CD8-positive, alpha-beta T cell (primary cell): ENCODE measurements at regions of chr6 and their contacts with region 1.

Region 1: GRCh38 chr6:27838058-27838944 is 73.9 kb downstream of the OR2B2 start:
- DNase-seq: peak; percentile 61 to 98 (median 74)
- ATAC-seq: peak; percentile 70
- H3K4me3 ChIP-seq: peak overlapping the region; percentile 64 to 76
- H3K4me3 Mint-ChIP-seq: no peak overlapping the region
- H3K27ac ChIP-seq: peak overlapping the region; percentile 91 to 98
- H3K27ac Mint-ChIP-seq: no peak overlapping the region
- H3K4me1 ChIP-seq: peaks cover 35% of the 10 kb centered on the region
- H3K4me1 Mint-ChIP-seq: peaks cover 21% of the 10 kb centered on the region
- H3K27me3 ChIP-seq: peaks cover 0 to 4% of the 10 kb centered on the region in 2 experiments
- H3K27me3 Mint-ChIP-seq: peaks cover 7% of the 10 kb centered on the region
- CTCF ChIP-seq: no peak

Region 2: GRCh38 chr6:26031595-26032339 is 1806.5 kb before region 1 on chr6:
- CTCF ChIA-PET with region 1: interaction called, 3 read pairs
- POLR2A ChIA-PET with region 1: interaction called, 29 read pairs
- intact Hi-C with region 1: loop called in 1 of 2 experiments (anchors 5 kb)
- DNase-seq: peak; percentile 79 to 93 (median 88)
- ATAC-seq: peak; percentile 63
- H3K4me3 ChIP-seq: peak overlapping the region; percentile 68 to 71
- H3K4me3 Mint-ChIP-seq: peak overlapping the region; percentile 93
- H3K27ac ChIP-seq: peak overlapping the region; percentile 76 to 79
- H3K27ac Mint-ChIP-seq: peak overlapping the region; percentile 96
- H3K4me1 ChIP-seq: peaks cover 31% of the 10 kb centered on the region
- H3K4me1 Mint-ChIP-seq: peaks cover 46% of the 10 kb centered on the region
- H3K27me3 ChIP-seq: no peaks in the 10 kb centered on the region
- H3K27me3 Mint-ChIP-seq: no peaks in the 10 kb centered on the region
- CTCF ChIP-seq: no peak

Region 3: GRCh38 chr6:26183581-26184366 is 1654.5 kb before region 1 on chr6:
- CTCF ChIA-PET with region 1: no interaction called
- POLR2A ChIA-PET with region 1: interaction called, 16 read pairs
- intact Hi-C with region 1: loop called in 1 of 2 experiments (anchors 5 kb)
- DNase-seq: peak in 7 of 9 experiments; percentile 33 to 90 (median 59)
- ATAC-seq: peak; percentile 88
- H3K4me3 ChIP-seq: peak overlapping the region; percentile 60 to 71
- H3K4me3 Mint-ChIP-seq: peak overlapping the region; percentile 100
- H3K27ac ChIP-seq: peak overlapping the region; percentile 61 to 76
- H3K27ac Mint-ChIP-seq: peak overlapping the region; percentile 99
- H3K4me1 ChIP-seq: peaks cover 20% of the 10 kb centered on the region
- H3K4me1 Mint-ChIP-seq: peaks cover 42% of the 10 kb centered on the region
- H3K27me3 ChIP-seq: no peaks in the 10 kb centered on the region
- H3K27me3 Mint-ChIP-seq: no peaks in the 10 kb centered on the region
- CTCF ChIP-seq: no peak

Region 4: DNA sequence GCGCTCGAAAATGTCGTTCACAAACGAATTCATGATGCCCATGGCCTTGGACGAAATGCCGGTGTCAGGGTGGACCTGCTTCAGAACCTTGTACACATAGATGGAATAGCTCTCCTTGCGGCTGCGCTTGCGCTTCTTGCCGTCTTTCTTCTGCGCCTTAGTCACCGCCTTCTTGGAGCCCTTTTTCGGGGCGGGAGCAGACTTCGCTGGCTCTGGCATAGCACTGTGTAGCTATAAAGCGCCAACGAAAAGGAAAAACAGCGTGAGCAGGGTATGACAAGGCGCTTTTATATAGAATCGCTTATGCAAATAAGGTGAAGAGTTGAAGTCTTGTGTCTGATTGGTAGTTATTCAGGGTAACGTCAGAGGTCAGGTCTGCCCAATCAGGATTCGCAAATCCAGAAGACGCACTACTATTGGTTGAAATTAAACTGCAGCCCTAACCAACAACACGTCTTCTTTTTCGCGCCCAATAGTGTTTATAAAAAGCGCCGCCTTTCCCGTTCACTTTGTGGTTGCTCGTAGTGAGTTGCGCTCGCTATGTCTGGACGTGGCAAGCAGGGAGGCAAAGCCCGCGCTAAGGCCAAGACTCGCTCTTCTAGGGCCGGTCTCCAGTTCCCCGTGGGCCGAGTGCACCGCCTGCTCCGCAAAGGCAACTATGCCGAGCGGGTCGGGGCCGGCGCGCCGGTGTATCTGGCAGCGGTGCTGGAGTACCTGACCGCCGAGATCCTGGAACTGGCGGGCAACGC is 705.6 kb before region 1 on chr6:
- CTCF ChIA-PET with region 1: no interaction called
- POLR2A ChIA-PET with region 1: interaction called, 37 read pairs
- intact Hi-C with region 1: no loop called
- DNase-seq: peak; percentile 80 to 99 (median 87)
- ATAC-seq: peak; percentile 82
- H3K4me3 ChIP-seq: peak overlapping the region; percentile 76 to 83
- H3K4me3 Mint-ChIP-seq: no peak overlapping the region
- H3K27ac ChIP-seq: peak overlapping the region; percentile 86 to 92
- H3K27ac Mint-ChIP-seq: no peak overlapping the region
- H3K4me1 ChIP-seq: peaks cover 15% of the 10 kb centered on the region
- H3K4me1 Mint-ChIP-seq: peaks cover 21% of the 10 kb centered on the region
- H3K27me3 ChIP-seq: no peaks in the 10 kb centered on the region
- H3K27me3 Mint-ChIP-seq: no peaks in the 10 kb centered on the region
- CTCF ChIP-seq: no peak

Region 5: DNA sequence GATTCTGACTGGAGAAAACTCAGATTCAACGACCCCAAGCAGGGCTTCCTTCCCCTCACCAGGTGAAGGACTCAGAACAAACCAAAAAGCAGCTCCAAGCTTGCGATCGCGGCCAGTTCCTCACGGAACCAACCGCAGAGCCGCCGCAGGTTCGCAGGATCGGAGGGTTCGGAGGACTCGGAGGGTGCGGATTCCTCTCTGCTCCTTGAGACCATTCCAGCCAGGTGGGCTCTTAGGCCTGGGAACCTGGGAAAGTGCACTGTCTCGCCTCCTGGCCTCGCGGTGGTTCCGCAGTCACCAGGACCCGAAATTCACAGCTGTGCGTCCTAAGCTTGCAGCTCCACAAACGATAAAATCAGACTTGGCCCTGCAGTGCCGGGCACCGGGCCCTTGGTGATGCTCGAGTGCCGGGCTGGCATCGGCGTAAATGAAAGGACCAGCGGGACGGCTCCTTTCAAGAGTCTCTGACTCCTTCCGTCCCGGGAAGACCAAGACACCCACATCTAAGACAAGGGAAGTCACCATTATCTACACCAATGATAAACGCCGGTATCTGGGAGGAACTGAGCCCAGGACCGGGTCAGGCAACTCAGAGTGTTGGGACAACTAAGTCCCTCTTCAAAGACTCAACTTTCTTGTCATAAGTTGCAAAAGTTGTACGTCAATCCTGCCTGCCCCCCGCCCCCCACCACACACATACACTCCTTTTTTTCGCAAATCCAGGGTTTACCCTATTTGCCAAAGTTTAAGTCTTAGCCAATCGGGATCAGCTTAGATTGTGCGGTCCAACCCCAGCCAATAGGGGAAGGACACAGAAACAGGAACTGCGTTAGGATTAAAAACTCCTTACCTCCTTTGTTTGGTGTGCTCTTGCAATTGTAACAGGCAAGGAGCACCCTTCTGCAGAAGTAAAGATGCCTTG is 660.6 kb before region 1 on chr6:
- CTCF ChIA-PET with region 1: no interaction called
- POLR2A ChIA-PET with region 1: interaction called, 16 read pairs
- intact Hi-C with region 1: no loop called
- DNase-seq: peak; percentile 46 to 89 (median 72)
- ATAC-seq: peak; percentile 69
- H3K4me3 ChIP-seq: peak overlapping the region; percentile 95 to 100
- H3K4me3 Mint-ChIP-seq: peak overlapping the region; percentile 93
- H3K27ac ChIP-seq: peak overlapping the region; percentile 48 to 68
- H3K27ac Mint-ChIP-seq: peak overlapping the region; percentile 91
- H3K4me1 ChIP-seq: no peaks in the 10 kb centered on the region
- H3K4me1 Mint-ChIP-seq: peaks cover 17% of the 10 kb centered on the region
- H3K27me3 ChIP-seq: no peaks in the 10 kb centered on the region
- H3K27me3 Mint-ChIP-seq: peaks cover 3% of the 10 kb centered on the region
- CTCF ChIP-seq: peak; percentile 11

Region 6: DNA sequence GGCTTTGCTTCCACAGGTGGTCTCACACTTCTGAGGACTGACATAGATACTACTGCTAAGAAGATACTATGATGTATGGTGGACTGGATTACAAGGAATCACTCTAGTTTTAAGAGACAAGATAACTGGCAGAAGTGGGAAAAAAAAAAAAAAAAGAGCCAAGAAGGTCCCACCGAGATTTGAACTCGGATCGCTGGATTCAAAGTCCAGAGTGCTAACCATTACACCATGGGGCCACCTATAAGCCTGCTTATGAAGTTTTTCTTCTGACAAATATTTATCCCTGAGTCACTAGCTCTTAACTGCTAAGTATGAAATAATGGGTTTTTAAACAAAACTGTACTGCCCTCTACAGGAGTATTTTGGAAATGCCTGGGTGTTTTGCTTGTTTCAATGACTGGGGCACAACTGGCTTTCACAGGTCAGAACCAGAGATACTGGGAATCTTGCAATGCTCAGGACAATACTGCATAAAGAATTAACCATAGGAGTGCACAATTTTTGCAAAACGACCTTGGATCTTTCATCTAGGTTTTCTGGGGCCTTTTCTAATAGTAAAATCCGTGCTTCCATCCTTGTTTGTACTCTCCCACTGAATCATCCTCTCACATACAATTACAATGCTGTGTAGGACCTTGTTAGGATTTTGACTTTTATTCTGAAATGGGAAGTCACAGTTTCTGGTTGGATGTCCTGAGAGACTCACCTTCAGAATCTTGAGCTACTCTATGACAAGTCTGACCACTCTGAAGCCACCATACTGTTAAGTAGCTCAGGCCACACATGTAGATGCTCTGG is 42.4 kb before region 1 on chr6:
- CTCF ChIA-PET with region 1: interaction called, 15 read pairs
- POLR2A ChIA-PET with region 1: interaction called, 16 read pairs
- intact Hi-C with region 1: no loop called
- DNase-seq: peak in 5 of 9 experiments; percentile 35 to 88 (median 64)
- ATAC-seq: peak; percentile 75
- H3K4me3 ChIP-seq: no peak overlapping the region
- H3K4me3 Mint-ChIP-seq: no peak overlapping the region
- H3K27ac ChIP-seq: no peak overlapping the region
- H3K27ac Mint-ChIP-seq: peak overlapping the region; percentile 11
- H3K4me1 ChIP-seq: peaks cover 17% of the 10 kb centered on the region
- H3K4me1 Mint-ChIP-seq: peaks cover 22% of the 10 kb centered on the region
- H3K27me3 ChIP-seq: peaks cover 0 to 5% of the 10 kb centered on the region in 2 experiments
- H3K27me3 Mint-ChIP-seq: peaks cover 7% of the 10 kb centered on the region
- CTCF ChIP-seq: peak; percentile 80

Region 7: GRCh38 chr6:27864906-27865849 is 26.9 kb after region 1 on chr6:
- CTCF ChIA-PET with region 1: interaction called, 9 read pairs
- POLR2A ChIA-PET with region 1: interaction called, 746 read pairs
- intact Hi-C with region 1: loop called (anchors 1 kb)
- DNase-seq: peak; percentile 37 to 97 (median 56)
- ATAC-seq: peak; percentile 83
- H3K4me3 ChIP-seq: peak overlapping the region; percentile 71 to 79
- H3K4me3 Mint-ChIP-seq: peak overlapping the region; percentile 95
- H3K27ac ChIP-seq: peak overlapping the region; percentile 67 to 83
- H3K27ac Mint-ChIP-seq: peak overlapping the region; percentile 94
- H3K4me1 ChIP-seq: peaks cover 17% of the 10 kb centered on the region
- H3K4me1 Mint-ChIP-seq: peaks cover 38% of the 10 kb centered on the region
- H3K27me3 ChIP-seq: no peaks in the 10 kb centered on the region
- H3K27me3 Mint-ChIP-seq: no peaks in the 10 kb centered on the region
- CTCF ChIP-seq: no peak

Region 8: GRCh38 chr6:28172006-28172405 is 333.7 kb after region 1 on chr6:
- CTCF ChIA-PET with region 1: no interaction called
- POLR2A ChIA-PET with region 1: no interaction called
- intact Hi-C with region 1: no loop called
- DNase-seq: no peak
- ATAC-seq: no peak
- H3K4me3 ChIP-seq: no peak overlapping the region
- H3K4me3 Mint-ChIP-seq: no peak overlapping the region
- H3K27ac ChIP-seq: no peak overlapping the region
- H3K27ac Mint-ChIP-seq: no peak overlapping the region
- H3K4me1 ChIP-seq: no peaks in the 10 kb centered on the region
- H3K4me1 Mint-ChIP-seq: no peaks in the 10 kb centered on the region
- H3K27me3 ChIP-seq: peaks cover 3 to 5% of the 10 kb centered on the region in 2 experiments
- H3K27me3 Mint-ChIP-seq: peaks cover 27% of the 10 kb centered on the region
- CTCF ChIP-seq: no peak